ENCODE measurements at regions of chr9 and their contacts with region 1.

Region 1: GRCh38 chr9:32579706-32580331 is 6.9 kb upstream of the NDUFB6 start:
- DNase-seq: no peak
- H3K4me3 ChIP-seq: no peak overlapping the region
- CTCF ChIP-seq: peak; percentile 88

Region 2: DNA sequence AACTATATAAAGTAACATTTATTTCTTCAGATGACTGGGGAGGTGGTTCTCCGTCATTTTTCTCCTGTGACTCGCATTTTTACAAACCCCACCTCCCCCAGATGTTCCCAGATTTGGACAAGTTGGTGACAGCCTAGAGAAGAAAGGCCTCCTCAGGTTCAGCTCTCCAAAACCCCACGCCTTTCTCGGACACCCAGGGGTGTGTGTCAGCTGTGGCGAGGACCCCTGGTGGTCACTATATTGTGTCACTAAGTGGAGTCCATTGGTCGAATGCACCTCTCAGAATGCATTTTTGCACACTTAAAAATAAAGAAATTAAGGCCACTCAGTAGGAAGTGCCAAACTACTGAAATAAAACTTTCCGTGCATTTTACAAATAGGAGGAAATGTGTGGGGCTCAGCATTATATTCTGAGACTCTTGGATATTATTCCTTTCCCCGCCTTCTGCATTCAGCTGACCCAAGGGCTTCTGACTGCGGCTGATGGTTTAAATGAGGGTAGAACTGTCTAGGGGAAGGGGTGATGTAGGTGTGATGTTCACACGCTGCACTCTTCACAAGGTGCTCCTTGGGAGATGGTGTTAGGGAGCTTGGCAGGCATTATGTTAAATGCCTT is 147.8 kb before region 1 on chr9:
- CTCF ChIA-PET with region 1: interaction called, 75 read pairs
- POLR2A ChIA-PET with region 1: no interaction called
- DNase-seq: no peak
- H3K4me3 ChIP-seq: no peak overlapping the region
- CTCF ChIP-seq: peak; percentile 53

Region 3: DNA sequence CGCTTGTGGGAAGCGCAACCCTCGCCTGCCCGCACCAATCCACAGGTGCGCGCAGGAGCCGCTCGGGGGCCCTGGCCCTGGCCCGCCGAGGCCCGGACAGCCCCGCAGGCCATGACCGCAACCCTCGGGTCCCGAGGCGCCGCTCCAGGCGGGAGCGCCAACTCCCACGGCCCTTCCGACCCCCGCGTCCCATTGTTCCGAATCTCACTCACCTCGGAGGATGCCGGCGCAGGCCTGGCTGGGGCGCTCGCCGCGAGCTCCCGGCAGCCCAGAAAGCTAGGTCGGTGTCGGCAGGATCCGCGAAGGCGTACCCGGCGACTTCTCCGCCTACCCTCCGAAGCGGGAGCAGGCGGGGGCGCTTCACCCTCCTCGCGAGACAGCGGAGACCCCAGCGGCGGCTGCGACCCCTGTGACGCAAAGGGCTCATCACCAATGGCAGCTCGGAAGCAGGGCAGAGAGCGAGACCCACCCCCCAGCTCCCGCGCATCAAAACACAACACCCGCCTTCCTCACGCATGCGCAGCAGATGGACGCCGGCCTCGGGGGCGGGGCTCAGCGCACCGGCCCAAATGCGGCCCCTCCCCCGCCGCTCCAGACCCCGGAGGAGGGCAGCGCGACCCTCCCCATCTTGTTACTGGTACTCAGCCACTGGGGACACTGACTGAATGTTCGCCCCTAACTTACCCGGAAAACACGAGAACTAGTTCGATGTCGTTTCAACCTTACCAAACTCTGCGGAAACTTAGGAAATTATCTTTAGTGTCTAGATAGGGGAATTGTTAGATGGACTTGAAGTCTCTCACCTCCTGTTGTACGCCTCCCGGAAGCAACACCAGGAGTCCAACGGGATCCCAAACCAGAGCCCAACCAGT is 29.0 kb before region 1 on chr9:
- CTCF ChIA-PET with region 1: interaction called, 30 read pairs
- POLR2A ChIA-PET with region 1: no interaction called
- DNase-seq: peak; percentile 45
- H3K4me3 ChIP-seq: peak overlapping the region; percentile 82
- CTCF ChIP-seq: peak; percentile 4

Region 4: GRCh38 chr9:32954642-32955041 is 374.8 kb after region 1 on chr9:
- CTCF ChIA-PET with region 1: interaction called, 35 read pairs
- POLR2A ChIA-PET with region 1: no interaction called
- DNase-seq: peak; percentile 37
- H3K4me3 ChIP-seq: no peak overlapping the region
- CTCF ChIP-seq: no peak

Measured in AG04449 (cell line).